ENCODE measurements at regions of chr1 and their contacts with region 1.

Region 1: DNA sequence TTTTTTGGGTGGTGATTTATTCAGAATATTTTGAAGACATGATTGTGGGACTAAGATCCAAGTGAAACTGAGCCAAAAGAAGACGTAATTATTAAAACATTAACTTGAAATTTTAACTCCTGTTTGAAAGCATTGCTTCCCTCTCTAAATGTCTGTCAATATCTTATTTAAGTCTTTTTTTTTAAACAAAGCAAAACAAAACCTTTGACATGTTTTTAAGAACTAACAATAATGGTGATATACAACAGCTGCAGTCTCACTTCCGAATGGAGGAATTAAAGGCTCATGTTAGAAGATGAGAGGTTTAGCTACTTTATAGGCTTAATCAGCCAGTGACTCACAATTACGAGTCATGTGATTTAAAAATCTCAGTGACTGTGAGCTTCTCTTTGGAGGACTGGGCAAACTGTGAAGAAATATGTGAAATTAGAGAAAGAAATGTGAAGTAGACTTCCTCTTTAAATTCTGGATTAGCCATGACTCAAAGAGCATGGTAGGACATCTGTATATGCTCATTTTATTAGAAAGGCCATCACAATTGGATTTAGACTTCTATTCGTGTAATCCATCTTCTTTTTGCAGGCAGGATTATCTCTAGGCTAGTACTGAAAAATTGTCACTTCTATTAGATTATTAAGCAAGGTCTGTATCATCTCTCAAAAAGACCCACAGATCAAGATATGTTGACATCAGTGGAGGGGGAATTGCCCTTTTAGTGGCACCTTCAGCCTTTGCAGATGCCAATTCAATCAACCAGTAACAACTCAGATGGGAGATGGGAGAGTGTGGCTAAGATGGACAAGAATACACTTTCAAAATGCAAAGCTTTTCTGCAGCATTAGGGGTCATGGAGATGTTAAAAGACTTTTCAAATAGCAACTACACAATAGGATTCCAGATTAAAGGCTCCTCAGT is 28.7 kb downstream of the KCNA3 start:
- DNase-seq: no peak
- H3K4me3 Mint-ChIP-seq: peak overlapping the region; percentile 1
- H3K27ac Mint-ChIP-seq: peak overlapping the region; percentile 70
- H3K4me1 Mint-ChIP-seq: peaks cover 42% of the 10 kb centered on the region
- H3K27me3 Mint-ChIP-seq: no peaks in the 10 kb centered on the region

Region 2: DNA sequence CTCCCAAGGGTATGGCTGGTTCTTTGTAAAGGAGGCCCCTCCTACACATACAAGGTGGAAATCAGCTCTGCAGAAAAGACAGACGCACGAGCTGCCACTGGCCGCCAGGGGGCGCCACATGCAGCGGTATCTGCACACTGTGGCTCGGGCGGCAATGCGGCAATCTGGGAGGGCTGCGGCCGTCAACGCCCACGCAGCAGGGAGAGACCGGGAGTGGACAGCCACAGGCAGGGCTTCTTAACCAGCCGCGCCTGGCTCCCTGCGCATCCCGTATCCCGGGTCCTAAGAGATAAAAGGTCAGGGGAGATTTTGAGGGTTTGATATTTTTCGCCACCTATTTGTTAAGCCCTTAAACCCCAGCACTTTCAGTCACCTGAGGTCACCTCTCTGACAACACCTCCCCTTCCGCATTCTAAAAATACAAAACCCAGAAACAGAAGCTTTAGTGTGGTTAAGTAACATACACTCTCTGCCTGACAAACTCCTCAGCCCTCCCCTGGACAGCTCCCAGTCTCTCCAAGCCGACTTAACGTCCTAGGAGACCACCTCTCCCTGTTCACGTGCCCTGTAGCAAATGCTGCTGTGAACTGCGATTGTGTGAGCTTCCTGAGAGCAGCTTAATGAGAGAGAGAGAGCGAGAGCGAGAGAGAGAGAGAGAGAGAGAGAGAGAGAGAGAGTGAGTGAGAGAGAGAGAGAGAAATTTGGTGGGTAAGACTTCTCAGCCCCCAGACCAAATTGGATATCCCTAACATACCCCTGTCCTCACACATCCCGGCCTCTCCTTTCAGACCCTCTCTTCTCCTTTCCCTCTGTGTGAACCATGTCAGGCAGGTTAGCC is 26.4 kb before region 1 on chr1:
- CTCF ChIA-PET with region 1: interaction called, 48 read pairs
- POLR2A ChIA-PET with region 1: interaction called, 4 read pairs
- intact Hi-C with region 1: no loop called
- DNase-seq: peak; percentile 93
- H3K4me3 Mint-ChIP-seq: peak overlapping the region; percentile 75
- H3K27ac Mint-ChIP-seq: peak overlapping the region; percentile 79
- H3K4me1 Mint-ChIP-seq: peaks cover 25% of the 10 kb centered on the region
- H3K27me3 Mint-ChIP-seq: no peaks in the 10 kb centered on the region

Region 3: DNA sequence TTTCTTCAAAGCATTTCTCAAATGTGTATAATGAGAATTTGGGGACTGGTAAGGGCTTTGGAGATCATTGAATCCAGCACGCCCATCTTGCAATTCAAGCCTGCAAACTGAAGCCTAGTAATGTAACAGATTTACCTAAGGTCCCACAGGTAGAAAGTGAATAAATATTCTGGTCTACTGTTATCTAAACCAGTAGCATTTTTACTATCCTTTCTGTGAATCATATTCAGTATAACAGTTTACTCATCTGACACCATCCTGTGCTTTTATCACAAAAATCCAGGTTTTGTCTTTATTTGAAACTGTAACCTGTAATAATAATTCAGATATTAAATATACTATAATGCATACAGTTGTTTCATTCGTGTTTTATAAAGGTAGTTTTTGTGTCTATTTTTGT is 11.3 kb after region 1 on chr1:
- CTCF ChIA-PET with region 1: interaction called, 5 read pairs
- POLR2A ChIA-PET with region 1: interaction called, 3 read pairs
- intact Hi-C with region 1: loop called (anchors 1 kb)
- DNase-seq: no peak
- H3K4me3 Mint-ChIP-seq: no peak overlapping the region
- H3K27ac Mint-ChIP-seq: no peak overlapping the region
- H3K4me1 Mint-ChIP-seq: peaks cover 50% of the 10 kb centered on the region
- H3K27me3 Mint-ChIP-seq: no peaks in the 10 kb centered on the region

Region 4: DNA sequence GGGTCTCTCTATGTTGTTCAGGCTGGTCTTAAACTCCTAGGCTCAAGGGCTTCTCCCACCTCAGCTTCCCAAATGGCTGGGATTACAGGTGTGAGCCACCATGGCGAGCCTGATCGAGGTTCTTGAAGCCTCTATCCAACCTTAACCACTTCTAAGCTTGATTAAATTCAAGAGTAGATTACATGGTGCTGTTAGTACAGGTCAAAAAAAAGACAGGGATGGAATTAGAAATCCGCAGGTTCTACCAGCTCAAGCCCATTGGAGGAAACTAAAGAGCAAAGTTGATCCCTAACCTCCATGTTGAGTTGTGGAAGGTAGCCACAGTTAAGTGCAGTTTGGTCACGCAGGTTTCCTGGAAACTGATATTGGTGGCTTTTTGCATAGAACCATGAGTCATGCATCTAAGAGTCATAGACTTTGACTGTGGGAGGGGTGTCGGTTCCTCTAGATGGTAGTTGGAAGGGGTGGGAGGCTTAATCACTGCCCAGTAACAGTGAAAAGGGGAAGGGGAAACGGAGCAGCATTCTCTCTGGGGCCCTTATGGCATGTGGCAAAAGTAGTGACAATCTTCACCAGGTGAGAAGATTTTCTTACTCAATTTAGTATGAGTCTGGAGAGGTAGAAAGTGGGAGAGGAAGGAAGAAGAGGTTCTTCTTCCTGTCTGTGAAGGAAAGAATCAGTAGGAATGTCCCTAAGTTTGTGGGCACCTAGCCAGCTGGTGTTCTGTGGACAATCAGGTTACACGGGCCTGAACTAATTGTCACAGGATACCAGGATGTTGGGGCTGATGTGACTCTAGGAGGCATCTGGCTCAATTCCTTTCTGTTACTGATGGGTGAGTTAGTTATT is 233.9 kb after region 1 on chr1:
- CTCF ChIA-PET with region 1: no interaction called
- POLR2A ChIA-PET with region 1: interaction called, 10 read pairs
- intact Hi-C with region 1: loop called (anchors 1 kb)
- DNase-seq: peak; percentile 80
- H3K4me3 Mint-ChIP-seq: peak overlapping the region; percentile 69
- H3K27ac Mint-ChIP-seq: peak overlapping the region; percentile 99
- H3K4me1 Mint-ChIP-seq: peaks cover 62% of the 10 kb centered on the region
- H3K27me3 Mint-ChIP-seq: no peaks in the 10 kb centered on the region

Measured in activated CD4-positive, alpha-beta memory T cell treated with anti-CD3 and anti-CD28 coated beads for 36 hours (primary cell).